ENCODE measurements at regions of chr1 and their contacts with region 1.

Region 1: GRCh38 chr1:23496490-23497181 is 12.7 kb upstream of the ASAP3 start:
- DNase-seq: no peak

Region 2: DNA sequence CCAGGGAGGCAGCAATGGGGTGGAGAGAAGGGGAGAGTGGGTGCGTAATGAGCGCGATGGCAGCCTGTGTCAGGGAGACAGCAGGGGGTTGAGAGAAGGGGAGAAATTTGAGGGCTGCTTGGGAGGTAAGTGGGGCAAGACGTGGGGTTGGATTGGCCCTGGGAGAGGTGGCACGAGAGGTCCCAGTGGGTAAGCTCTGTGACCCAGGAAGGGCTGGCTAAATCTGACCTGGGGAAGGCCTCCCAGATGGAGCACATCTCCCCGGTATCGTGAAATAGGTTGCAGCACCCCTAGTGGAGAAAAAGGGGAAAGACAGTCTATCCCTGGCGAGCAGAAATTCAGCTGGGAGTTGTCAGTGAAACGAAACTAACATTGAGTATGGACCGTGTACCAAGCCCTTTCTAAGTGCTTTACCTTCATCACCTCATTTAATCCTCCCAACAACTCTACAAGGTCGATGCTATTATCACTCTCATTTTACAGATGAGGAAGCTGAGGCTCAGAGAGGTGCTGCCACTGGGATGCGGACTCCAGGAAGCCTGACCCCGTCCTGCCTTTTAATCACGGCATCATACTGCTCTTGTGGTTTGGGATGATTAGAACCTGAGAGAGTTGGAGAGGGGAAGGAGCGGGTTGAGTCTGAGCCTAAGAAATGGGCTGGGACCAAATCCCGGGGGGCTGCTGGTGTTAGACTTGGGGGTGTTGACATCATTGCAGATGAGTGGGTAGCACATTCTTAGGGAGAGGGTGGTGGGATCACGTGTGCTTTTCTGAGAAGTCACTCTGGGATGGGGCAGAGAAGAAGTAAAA is 138.4 kb after region 1 on chr1:
- intact Hi-C with region 1: loop called (anchors 5 kb)
- DNase-seq: peak in 39 of 42 donors; percentile 18 to 87 (median 58)

Region 3: DNA sequence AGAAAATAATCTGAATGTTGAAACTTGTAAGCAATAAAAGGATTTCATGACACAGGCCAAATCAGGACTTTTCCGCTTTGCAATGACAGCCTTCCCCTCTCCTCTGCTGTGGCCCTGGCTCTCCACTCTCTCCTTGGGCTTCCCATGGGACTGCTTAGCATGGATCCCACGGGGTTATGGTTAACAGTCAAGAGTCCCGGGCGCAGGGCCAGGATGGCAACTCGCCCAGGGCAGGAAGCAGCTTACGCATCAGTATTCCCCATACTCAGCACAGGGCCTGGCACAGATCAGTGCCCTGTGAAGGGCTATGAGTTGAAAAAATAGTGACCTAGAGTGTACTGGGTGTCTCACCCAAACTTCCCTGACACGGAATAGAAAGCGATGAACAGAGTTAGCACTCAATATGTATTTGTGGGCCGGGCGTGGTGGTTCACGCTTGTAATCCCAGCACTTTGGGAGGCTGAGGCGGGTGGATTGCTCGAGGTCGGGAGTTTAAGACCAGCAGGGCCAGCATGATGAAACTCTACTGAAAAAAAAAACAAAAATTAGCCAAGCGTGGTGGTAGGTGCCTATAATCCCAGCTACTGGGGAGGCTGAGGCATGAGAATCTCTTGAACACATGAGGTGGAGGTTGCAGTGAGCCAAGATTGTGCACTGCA is 793.4 kb after region 1 on chr1:
- intact Hi-C with region 1: no loop called
- DNase-seq: peak; percentile 50 to 96 (median 84)

Measured in head of caudate nucleus (tissue), 42 donors.